MCF 10A (cell line): ENCODE measurements at regions of chr6 and their contacts with region 1.

Region 1: DNA sequence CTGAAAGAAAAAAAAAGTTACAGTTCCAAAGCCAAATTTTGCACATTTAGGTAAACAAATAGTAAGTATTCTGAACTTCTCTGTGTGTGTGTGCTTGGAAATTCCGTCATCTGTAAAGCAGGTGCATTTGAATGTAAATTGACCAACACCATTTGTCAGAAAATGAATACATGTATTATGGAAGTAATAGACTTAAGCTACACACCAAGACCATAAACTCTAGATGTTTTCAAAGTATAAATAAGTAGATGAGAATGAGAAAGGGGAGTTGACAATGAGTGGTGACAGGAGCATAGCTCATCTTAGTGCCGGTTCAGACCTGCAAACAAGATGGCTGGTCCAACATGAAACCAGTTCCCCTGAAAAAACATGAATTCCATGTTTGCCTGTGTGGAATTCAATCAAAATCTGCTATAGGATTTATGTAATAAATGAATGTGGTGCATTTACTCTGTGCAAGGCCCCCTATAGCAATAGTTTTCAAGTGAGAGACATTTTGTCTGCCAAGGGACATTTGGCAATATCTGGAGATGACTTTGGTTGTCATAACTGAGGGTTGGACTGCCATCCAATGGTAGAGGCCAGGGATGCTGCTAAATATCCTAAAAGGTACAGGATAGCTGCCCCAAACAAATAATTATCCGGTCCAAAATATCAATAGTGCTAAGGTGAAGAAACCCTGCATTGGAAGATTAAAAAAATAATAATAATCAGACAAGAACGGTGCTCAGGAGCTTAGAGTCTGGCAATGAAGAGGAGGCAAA is 11.0 kb upstream of the FILIP1 start:
- DNase-seq: peak; percentile 29
- H3K4me3 Mint-ChIP-seq: no peak overlapping the region
- H3K27ac Mint-ChIP-seq: no peak overlapping the region
- H3K4me1 Mint-ChIP-seq: no peaks in the 10 kb centered on the region
- H3K27me3 Mint-ChIP-seq: no peaks in the 10 kb centered on the region
- CTCF ChIP-seq: no peak

Region 2: DNA sequence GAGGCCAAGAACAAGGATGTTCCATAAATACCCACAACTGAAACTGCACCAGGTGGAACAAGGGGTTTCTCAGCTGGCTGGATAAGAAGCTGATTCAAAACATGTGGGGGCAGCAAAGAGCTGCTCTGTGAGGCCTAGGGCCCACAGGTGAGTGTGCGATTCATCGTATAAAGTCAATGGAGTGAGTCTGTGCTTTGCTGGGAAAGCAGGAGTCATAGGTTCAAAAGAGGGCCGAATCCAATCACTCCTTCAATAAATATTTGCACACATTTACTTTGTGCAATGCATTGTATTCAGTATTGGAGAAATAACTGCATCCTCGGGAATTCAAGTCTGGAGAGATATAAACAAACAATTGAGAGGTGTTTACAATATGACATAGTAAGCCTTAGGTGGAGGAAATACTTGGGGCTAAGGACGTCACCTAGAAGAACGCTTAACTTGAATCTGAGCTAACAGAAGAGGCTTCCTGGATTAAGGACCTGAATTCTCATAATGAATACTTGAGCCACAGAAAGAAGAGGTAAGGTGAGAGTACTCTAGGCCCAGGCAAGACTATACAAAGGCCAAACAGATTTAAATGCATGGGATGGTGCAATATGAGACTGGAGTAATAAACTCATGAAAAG is 136.4 kb before region 1 on chr6:
- CTCF ChIA-PET with region 1: interaction called, 20 read pairs
- POLR2A ChIA-PET with region 1: no interaction called
- intact Hi-C with region 1: no loop called
- DNase-seq: peak; percentile 62
- H3K4me3 Mint-ChIP-seq: no peak overlapping the region
- H3K27ac Mint-ChIP-seq: no peak overlapping the region
- H3K4me1 Mint-ChIP-seq: no peaks in the 10 kb centered on the region
- H3K27me3 Mint-ChIP-seq: no peaks in the 10 kb centered on the region
- CTCF ChIP-seq: peak; percentile 31

Region 3: DNA sequence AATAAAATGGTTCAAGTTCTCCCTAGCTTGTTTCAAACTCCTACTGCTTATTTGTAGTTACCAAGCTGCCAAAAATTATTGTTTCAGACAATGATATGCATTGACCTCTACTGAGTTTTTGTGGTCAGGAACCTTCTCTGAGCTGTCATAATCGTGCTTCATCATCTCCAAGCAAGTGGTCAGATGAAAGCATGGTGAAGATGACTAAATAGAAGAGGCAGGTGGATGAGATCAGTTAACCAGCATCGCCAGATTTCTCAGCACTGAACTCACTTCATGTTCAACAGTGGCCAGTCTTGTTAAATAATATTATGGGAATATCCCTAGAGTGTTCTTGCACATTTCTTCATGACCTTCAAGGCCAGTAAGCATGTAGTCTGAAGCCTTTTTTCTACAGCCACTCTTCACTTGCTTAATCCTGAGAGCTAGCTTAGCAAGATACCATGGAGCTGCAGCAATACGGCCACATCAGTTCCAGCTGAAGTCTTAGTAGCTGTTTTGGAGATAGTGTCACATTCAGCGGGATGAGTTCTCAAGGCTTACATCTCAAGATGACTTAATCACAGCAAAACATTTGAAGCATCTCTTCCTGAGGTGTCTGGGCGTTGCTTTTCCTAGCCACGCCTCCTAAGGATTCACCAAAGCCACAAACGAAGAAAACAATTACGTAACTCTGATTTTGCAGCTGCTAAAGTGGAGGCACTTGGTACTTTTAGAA is 118.4 kb before region 1 on chr6:
- CTCF ChIA-PET with region 1: no interaction called
- POLR2A ChIA-PET with region 1: no interaction called
- intact Hi-C with region 1: no loop called
- DNase-seq: peak; percentile 40
- H3K4me3 Mint-ChIP-seq: no peak overlapping the region
- H3K27ac Mint-ChIP-seq: no peak overlapping the region
- H3K4me1 Mint-ChIP-seq: no peaks in the 10 kb centered on the region
- H3K27me3 Mint-ChIP-seq: no peaks in the 10 kb centered on the region
- CTCF ChIP-seq: no peak

Region 4: DNA sequence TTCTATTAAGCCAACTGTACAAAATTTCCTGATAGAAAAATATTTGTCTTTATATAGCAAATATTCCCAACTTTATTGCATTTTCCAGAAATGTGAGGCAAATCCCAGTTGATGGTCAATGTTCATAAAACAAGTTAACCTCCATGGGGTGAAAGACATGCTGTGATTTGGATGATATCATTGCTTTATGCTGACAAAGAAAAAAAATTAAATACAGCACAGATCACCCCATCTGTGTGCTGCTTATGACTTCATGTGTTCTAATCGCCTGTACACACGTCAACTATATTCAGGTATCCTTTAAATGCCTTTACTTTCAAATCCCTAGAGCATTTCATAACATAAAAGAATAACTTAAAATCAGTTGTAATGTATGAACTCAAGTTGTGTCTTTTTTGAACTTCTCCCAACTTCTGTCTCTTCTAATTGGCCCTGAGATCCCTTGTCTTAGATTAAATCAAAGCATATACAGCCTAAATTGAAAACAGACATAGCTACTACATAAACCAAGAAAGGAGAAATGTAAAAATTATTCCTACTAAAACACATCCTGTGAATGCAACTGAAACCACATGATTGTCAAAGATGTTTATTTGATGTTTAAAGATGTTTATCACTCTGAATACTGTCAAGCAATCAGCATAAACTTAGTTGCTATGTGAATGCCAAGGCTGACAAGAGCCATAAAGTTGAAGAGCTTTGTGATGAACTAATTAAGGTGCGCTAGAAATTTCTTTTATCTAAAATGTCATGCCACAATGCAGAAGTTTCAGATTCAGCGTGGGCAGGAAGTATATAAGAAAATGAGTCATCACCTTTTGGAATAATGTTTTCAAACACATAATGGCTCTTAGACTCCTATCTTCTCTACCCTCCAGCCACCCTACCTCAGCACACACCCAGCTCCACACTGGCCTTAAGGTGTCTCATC is 79.8 kb before region 1 on chr6:
- CTCF ChIA-PET with region 1: no interaction called
- POLR2A ChIA-PET with region 1: no interaction called
- intact Hi-C with region 1: no loop called
- DNase-seq: peak; percentile 20
- H3K4me3 Mint-ChIP-seq: no peak overlapping the region
- H3K27ac Mint-ChIP-seq: peak overlapping the region; percentile 36
- H3K4me1 Mint-ChIP-seq: peaks cover 9% of the 10 kb centered on the region
- H3K27me3 Mint-ChIP-seq: no peaks in the 10 kb centered on the region
- CTCF ChIP-seq: no peak

Region 5: DNA sequence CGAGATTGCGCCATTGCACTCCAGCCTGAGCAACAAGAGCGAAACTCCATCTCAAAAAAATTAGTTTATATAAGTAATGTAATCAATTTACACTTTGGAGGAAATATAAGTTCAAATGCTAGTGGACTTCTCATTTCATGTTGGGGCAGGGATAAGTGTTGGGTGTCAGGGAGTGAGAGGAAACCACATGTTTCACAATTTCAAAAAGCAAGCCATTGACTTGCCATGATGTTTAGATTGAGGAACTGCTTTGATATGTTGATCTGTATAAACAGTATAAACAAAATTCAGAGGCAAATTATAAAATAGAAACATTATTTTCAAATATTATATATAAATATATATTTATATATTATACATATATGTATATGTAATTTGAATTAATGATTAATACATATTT is 53.7 kb before region 1 on chr6:
- CTCF ChIA-PET with region 1: no interaction called
- POLR2A ChIA-PET with region 1: no interaction called
- intact Hi-C with region 1: no loop called
- DNase-seq: no peak
- H3K4me3 Mint-ChIP-seq: no peak overlapping the region
- H3K27ac Mint-ChIP-seq: no peak overlapping the region
- H3K4me1 Mint-ChIP-seq: no peaks in the 10 kb centered on the region
- H3K27me3 Mint-ChIP-seq: no peaks in the 10 kb centered on the region
- CTCF ChIP-seq: no peak

Region 6: GRCh38 chr6:75568100-75568499 is 63.5 kb after region 1 on chr6:
- CTCF ChIA-PET with region 1: no interaction called
- POLR2A ChIA-PET with region 1: no interaction called
- intact Hi-C with region 1: no loop called
- DNase-seq: no peak
- H3K4me3 Mint-ChIP-seq: no peak overlapping the region
- H3K27ac Mint-ChIP-seq: no peak overlapping the region
- H3K4me1 Mint-ChIP-seq: no peaks in the 10 kb centered on the region
- H3K27me3 Mint-ChIP-seq: peaks cover 12% of the 10 kb centered on the region
- CTCF ChIP-seq: no peak